Ascending aorta (tissue), 2 donors: ENCODE measurements at regions of chr17 and their contacts with region 1.

Region 1: DNA sequence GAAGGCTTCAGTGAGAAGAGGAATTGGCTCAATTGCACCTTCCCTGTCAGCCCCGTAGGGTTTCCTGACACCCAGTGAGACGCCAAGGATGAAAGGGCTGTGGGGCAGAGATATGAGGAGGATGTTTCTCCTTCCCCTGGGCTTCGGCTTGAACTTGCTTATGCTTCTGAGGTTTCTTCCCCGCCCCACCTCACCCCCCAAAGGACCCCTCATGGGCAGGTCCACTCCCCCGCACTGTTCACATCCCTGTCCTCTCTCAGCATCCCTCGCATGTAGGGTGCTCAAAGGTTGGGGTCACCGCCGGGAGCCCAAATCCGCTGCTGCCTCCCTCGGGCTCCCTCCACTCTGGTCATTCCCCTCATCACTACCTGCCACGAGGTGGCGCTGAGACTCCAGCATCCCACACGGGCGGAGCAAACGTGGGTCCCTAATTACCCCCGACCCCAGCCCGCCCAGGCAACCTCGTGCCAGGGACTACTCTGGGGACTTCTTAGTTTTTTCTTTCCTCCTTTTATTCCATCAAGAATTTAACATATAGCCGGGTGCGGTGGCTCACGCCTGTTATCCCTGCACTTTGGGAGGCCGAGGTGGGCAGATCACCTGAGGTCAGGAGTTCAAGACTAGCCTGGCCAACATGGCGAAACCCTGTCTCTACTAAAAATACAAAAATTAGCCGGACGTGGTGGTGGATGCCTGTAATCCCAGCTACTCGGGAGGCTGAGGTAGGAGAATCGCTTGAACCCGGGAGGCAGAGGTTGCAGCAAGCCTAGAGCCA is 3.3 kb upstream of the TRARG1 start:
- DNase-seq: peak in 1 of 2 donors; percentile 81
- H3K4me3 ChIP-seq: peak overlapping the region in 1 of 2 donors; percentile 24
- H3K27ac ChIP-seq: no peak overlapping the region
- H3K4me1 ChIP-seq: peaks cover 4 to 7% of the 10 kb centered on the region in 2 donors
- H3K27me3 ChIP-seq: no peaks in the 10 kb centered on the region
- CTCF ChIP-seq: peak; percentile 76 to 97 (median 82)

Region 2: DNA sequence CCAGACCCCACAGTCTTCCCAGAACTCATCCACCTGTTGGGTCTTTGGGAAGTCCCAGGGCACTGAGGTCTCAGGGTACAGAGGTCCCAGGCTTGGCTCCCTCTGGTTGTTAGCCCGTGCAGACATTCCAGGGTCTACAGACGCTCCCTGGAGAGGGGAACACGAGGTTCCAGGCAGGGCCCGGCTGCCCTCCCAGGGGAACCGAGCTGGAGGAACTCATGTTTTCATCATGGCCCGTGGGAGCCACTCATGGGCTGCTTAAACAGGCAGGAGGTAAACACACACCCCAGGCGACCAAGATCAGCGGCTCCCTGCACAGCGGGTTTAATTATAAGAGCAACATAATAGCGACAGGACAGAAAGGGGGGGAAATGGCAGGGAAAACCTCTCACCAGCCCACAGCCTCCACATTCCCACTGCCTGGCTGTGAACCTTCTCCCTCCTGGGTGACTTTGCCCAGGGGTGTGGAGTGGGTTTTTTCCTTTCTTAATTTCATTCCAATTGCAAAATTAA is 39.8 kb after region 1 on chr17:
- intact Hi-C with region 1: loop called (anchors 1 kb)
- DNase-seq: peak; percentile 59 to 84
- H3K4me3 ChIP-seq: peak overlapping the region in 1 of 2 donors; percentile 1
- H3K27ac ChIP-seq: peak overlapping the region; percentile 56 to 81
- H3K4me1 ChIP-seq: peaks cover 4 to 25% of the 10 kb centered on the region in 2 donors
- H3K27me3 ChIP-seq: no peaks in the 10 kb centered on the region
- CTCF ChIP-seq: no peak

Region 3: GRCh38 chr17:1331708-1332107 is 55.6 kb after region 1 on chr17:
- intact Hi-C with region 1: loop called (anchors 1 kb)
- DNase-seq: no peak
- H3K4me3 ChIP-seq: no peak overlapping the region
- H3K27ac ChIP-seq: no peak overlapping the region
- H3K4me1 ChIP-seq: no peaks in the 10 kb centered on the region
- H3K27me3 ChIP-seq: no peaks in the 10 kb centered on the region
- CTCF ChIP-seq: no peak